Calu3 (cell line): ENCODE measurements at regions of chr5 and their contacts with region 1.

Region 1: GRCh38 chr5:157130925-157131324 is 11.7 kb downstream of the MED7 start:
- DNase-seq: peak; percentile 19
- H3K4me3 Mint-ChIP-seq: no peak overlapping the region
- H3K27ac Mint-ChIP-seq: no peak overlapping the region
- H3K4me1 Mint-ChIP-seq: peaks cover 9% of the 10 kb centered on the region
- H3K27me3 Mint-ChIP-seq: no peaks in the 10 kb centered on the region
- CTCF ChIP-seq: no peak

Region 2: DNA sequence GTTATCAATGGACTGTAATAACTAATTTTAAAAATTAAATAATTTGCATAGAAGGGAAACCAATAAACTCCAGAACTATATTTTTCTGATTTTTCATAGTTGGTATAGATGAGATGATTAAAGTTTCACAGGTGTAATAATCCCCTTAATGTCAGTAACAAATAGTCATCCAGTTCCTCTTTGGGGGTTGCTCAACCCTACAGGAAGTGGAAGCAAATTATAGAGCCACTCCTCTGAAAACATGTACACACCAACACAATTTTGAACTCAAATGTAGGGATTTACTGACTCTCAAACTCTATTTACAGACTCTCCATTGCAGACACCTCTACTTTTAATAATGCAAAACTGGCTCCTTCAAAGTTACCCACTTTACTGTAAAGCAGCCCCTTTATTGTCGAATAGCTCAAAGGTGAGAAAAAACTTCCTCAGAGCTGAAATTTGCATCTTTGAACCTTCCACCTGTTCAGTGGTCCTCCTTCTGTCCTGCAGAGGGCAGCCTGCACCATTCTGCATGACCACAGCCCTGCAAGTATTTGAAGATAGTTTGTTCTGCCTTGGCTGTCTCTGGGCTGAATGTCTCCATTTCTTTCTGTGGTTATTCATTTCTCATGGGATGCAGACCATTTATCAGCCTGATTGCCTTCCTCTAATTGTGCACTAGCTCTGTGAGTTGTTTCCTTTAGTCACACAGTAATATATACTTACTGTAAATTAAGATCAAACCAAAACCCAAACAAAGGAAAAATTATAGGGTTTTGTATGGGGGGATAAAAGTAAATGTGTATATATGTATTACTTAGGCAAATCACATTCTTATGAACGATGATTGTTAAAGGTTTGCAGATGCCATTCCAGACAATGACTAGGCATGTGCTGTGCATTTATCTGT is 1187.2 kb before region 1 on chr5:
- CTCF ChIA-PET with region 1: interaction called, 7 read pairs
- intact Hi-C with region 1: loop called (anchors 2 kb)
- DNase-seq: peak; percentile 39
- H3K4me3 Mint-ChIP-seq: no peak overlapping the region
- H3K27ac Mint-ChIP-seq: no peak overlapping the region
- H3K4me1 Mint-ChIP-seq: no peaks in the 10 kb centered on the region
- H3K27me3 Mint-ChIP-seq: peaks cover 16% of the 10 kb centered on the region
- CTCF ChIP-seq: peak; percentile 45

Region 3: GRCh38 chr5:156835905-156836304 is 295.0 kb before region 1 on chr5:
- CTCF ChIA-PET with region 1: no interaction called
- intact Hi-C with region 1: loop called (anchors 1 kb)
- DNase-seq: peak; percentile 11
- H3K4me3 Mint-ChIP-seq: no peak overlapping the region
- H3K27ac Mint-ChIP-seq: no peak overlapping the region
- H3K4me1 Mint-ChIP-seq: no peaks in the 10 kb centered on the region
- H3K27me3 Mint-ChIP-seq: no peaks in the 10 kb centered on the region
- CTCF ChIP-seq: peak; percentile 51

Region 4: GRCh38 chr5:156934450-156935211 is 196.3 kb before region 1 on chr5:
- CTCF ChIA-PET with region 1: no interaction called
- intact Hi-C with region 1: loop called (anchors 5 kb)
- DNase-seq: peak; percentile 52
- H3K4me3 Mint-ChIP-seq: no peak overlapping the region
- H3K27ac Mint-ChIP-seq: no peak overlapping the region
- H3K4me1 Mint-ChIP-seq: no peaks in the 10 kb centered on the region
- H3K27me3 Mint-ChIP-seq: no peaks in the 10 kb centered on the region
- CTCF ChIP-seq: peak; percentile 33

Region 5: GRCh38 chr5:156991714-156992113 is 139.2 kb before region 1 on chr5:
- CTCF ChIA-PET with region 1: no interaction called
- intact Hi-C with region 1: no loop called
- DNase-seq: peak; percentile 10
- H3K4me3 Mint-ChIP-seq: no peak overlapping the region
- H3K27ac Mint-ChIP-seq: no peak overlapping the region
- H3K4me1 Mint-ChIP-seq: no peaks in the 10 kb centered on the region
- H3K27me3 Mint-ChIP-seq: no peaks in the 10 kb centered on the region
- CTCF ChIP-seq: no peak

Region 6: GRCh38 chr5:157038568-157039187 is 92.2 kb before region 1 on chr5:
- CTCF ChIA-PET with region 1: no interaction called
- intact Hi-C with region 1: loop called (anchors 2 kb)
- DNase-seq: no peak
- H3K4me3 Mint-ChIP-seq: no peak overlapping the region
- H3K27ac Mint-ChIP-seq: no peak overlapping the region
- H3K4me1 Mint-ChIP-seq: peaks cover 27% of the 10 kb centered on the region
- H3K27me3 Mint-ChIP-seq: no peaks in the 10 kb centered on the region
- CTCF ChIP-seq: no peak

Region 7: DNA sequence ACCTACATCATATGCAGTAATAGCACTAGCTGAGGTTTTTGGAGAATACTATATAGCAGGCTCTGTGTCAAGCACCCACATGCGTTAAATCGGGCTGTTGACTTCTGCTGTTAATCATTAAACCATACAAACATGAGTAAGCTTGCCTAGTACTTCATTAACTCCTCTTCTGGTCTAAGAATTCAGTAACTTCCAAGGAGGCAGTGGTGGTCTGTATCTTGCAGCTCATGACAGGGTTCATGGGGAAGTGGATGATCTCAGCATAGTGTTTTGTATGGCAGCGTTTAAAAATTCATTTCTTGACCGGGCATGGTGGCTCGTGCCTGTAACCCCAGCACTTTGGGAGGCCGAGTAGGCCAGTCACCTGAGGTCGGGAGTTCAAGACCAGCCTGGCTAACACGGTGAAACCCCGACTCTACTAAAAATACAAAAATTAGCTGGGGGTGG is 71.8 kb before region 1 on chr5 and contains the start of gene HAVCR1:
- CTCF ChIA-PET with region 1: interaction called, 10 read pairs
- intact Hi-C with region 1: no loop called
- DNase-seq: peak; percentile 64
- H3K4me3 Mint-ChIP-seq: peak within 1 kb of the TSS; percentile 29
- H3K27ac Mint-ChIP-seq: peak within 1 kb of the TSS; percentile 92
- H3K4me1 Mint-ChIP-seq: peaks cover 62% of the 10 kb centered on the region
- H3K27me3 Mint-ChIP-seq: no peaks in the 10 kb centered on the region
- CTCF ChIP-seq: no peak
- total RNA-seq, gene HAVCR1: 5.8 and 6.0 TPM in 2 replicates

Region 8: DNA sequence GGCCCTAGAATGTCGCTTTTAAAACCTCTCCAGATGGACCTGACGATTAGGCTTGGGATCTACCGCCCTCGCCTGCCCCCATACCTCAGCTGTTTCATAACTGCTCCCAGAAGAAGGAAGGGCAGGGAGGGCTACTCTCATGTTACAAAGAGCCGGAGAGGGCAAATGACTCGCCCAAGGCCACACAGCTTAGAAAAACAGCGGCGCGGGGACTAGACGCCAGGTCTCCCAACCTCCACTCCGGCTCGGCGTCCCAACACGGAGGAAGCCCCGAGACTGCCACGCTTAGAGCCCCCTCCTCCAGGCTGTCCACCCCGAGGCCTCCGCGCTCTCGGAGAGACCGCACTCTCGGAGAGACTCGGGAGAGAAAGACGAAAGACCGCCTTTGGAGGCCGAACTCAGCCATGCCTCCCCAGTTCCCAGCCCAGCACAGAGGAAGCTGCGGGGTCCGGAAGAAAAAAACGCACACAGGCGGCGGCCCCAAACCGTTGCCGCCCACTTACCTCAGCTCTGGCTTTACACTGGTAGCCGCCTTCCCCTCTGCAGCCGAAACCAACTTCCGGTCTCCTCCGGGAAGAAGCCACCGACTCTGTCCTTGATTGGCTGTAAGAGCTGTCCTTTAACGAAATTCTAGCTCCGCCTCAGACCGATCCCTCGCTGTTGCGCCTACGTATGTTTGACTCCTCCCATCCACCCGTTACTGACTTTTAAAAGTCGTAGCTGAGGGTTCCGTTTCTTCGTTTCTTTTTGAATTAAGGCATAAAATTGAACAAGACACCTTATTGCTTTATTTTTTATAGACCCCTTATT is 11.6 kb after region 1 on chr5 and contains the start of gene MED7:
- CTCF ChIA-PET with region 1: interaction called, 11 read pairs
- intact Hi-C with region 1: no loop called
- DNase-seq: peak; percentile 95
- H3K4me3 Mint-ChIP-seq: peak within 1 kb of the TSS; percentile 92
- H3K27ac Mint-ChIP-seq: peak within 1 kb of the TSS; percentile 96
- H3K4me1 Mint-ChIP-seq: peaks cover 12% of the 10 kb centered on the region
- H3K27me3 Mint-ChIP-seq: no peaks in the 10 kb centered on the region
- CTCF ChIP-seq: no peak
- total RNA-seq, gene MED7: 21.2 and 24.1 TPM in 2 replicates

Region 9: GRCh38 chr5:157265714-157266285 is 134.9 kb after region 1 on chr5 and contains the start of gene CYFIP2:
- CTCF ChIA-PET with region 1: no interaction called
- intact Hi-C with region 1: no loop called
- DNase-seq: peak; percentile 74
- H3K4me3 Mint-ChIP-seq: peak within 1 kb of the TSS; percentile 95
- H3K27ac Mint-ChIP-seq: peak within 1 kb of the TSS; percentile 22
- H3K4me1 Mint-ChIP-seq: peaks cover 15% of the 10 kb centered on the region
- H3K27me3 Mint-ChIP-seq: peaks cover 10% of the 10 kb centered on the region
- CTCF ChIP-seq: no peak
- total RNA-seq, gene CYFIP2: 37.8 and 38.8 TPM in 2 replicates